Caco-2 (cell line): ENCODE measurements at regions of chr11 and their contacts with region 1.

Region 1: GRCh38 chr11:62805076-62805892 is at the start of gene NXF1:
- DNase-seq: peak; percentile 94 to 98
- H3K4me3 ChIP-seq: peak within 1 kb of the TSS; percentile 58
- H3K4me3 Mint-ChIP-seq: peak within 1 kb of the TSS; percentile 92
- H3K27ac Mint-ChIP-seq: peak within 1 kb of the TSS; percentile 98
- H3K4me1 ChIP-seq: no peaks in the 10 kb centered on the region; the same call in 1 of the 2 replicates
- H3K4me1 Mint-ChIP-seq: peaks cover 11% of the 10 kb centered on the region
- H3K27me3 ChIP-seq: no peaks in the 10 kb centered on the region
- H3K27me3 Mint-ChIP-seq: no peaks in the 10 kb centered on the region
- CTCF ChIP-seq: peak in 1 of 2 experiments; percentile 27
- total RNA-seq, gene NXF1: 77.5 and 77.6 TPM in 2 replicates

Region 2: GRCh38 chr11:62860835-62861563 is 55.7 kb after region 1 on chr11:
- CTCF ChIA-PET with region 1: no interaction called
- POLR2A ChIA-PET with region 1: interaction called, 3 read pairs
- intact Hi-C with region 1: loop called (anchors 2 kb)
- DNase-seq: no peak
- H3K4me3 ChIP-seq: no peak overlapping the region
- H3K4me3 Mint-ChIP-seq: peak overlapping the region; percentile 42
- H3K27ac Mint-ChIP-seq: peak overlapping the region; percentile 51
- H3K4me1 ChIP-seq: peaks cover 29% of the 10 kb centered on the region
- H3K4me1 Mint-ChIP-seq: peaks cover 47% of the 10 kb centered on the region
- H3K27me3 ChIP-seq: no peaks in the 10 kb centered on the region
- H3K27me3 Mint-ChIP-seq: no peaks in the 10 kb centered on the region
- CTCF ChIP-seq: no peak